ENCODE measurements at regions of chr18 and their contacts with region 1.

Region 1: DNA sequence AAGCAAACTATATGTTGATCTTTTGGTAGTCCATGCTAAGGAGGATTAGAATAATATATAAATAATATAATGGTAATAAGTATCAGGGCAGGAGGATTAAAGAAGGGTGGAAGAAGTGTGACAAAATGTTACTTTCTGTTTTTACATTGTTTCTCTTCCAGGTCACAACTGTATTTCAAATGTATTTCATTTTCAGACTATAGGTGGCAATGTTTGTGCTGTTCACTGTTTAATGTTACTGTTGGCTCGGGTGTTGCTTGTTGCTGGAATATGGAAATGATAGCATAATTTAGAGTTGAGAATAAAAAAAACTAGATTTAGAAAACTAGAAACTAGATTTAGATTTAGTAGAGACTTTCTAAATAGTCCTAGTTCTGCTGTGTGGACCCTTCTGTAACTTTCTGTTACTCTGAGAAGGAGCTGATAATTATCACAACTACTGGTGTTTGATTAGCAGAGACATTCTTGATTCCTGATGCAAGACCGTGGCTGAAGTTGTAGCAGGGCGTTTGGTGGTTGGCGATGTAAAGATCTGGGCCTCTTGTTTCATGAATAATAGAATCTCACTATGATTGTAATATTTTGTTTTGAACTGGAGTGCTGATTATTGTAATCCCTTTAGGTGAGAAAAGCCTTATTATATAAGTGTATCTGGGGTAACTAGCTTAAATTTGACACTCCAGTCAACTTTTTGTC is 7.9 kb downstream of the NEDD4L start:
- DNase-seq: no peak
- ATAC-seq: peak; percentile 91
- H3K4me3 ChIP-seq: no peak overlapping the region
- H3K27ac ChIP-seq: no peak overlapping the region
- H3K4me1 ChIP-seq: no peaks in the 10 kb centered on the region
- H3K27me3 ChIP-seq: no peaks in the 10 kb centered on the region
- CTCF ChIP-seq: peak; percentile 38 to 62 (median 41); a peak in 5 of 6 replicates
- EP300 ChIP-seq: no peak
- POLR2A ChIP-seq: no peak
- RAD21 ChIP-seq: peak; percentile 45; the same call in 1 of the 2 replicates

Region 2: DNA sequence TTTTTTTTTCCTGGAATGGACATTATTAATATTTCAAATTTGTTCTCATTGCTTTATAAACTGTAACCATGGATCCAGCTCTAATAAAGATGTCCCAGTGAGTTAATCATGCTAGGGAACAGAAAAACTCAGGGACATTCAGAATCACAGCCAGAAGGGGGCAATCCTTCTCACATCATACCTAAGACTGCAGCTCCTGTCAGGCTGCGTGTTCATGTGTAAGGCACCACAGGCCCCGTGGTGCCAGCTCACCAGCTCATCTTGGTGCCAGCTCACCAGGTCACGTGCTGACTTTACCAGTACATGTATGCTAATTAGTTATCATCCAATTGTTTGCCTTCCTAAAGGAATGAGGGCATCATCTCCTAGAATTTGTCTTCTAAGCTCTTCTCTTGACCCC is 92.6 kb before region 1 on chr18:
- CTCF ChIA-PET with region 1: interaction called, 12 read pairs
- POLR2A ChIA-PET with region 1: no interaction called
- RAD21 ChIA-PET with region 1: interaction called, 4 read pairs
- SMC1A ChIA-PET with region 1: interaction called, 6 read pairs
- in situ Hi-C with region 1: no loop called
- intact Hi-C with region 1: no loop called
- DNase-seq: no peak
- ATAC-seq: peak; percentile 86
- H3K4me3 ChIP-seq: no peak overlapping the region
- H3K27ac ChIP-seq: no peak overlapping the region
- H3K4me1 ChIP-seq: no peaks in the 10 kb centered on the region
- H3K27me3 ChIP-seq: 0 out of 4 replicates have a peak, but pooled peaks cover 0 to 2% of the 10 kb centered on the region in 2 experiments
- CTCF ChIP-seq: peak; percentile 45 to 54 (median 49); a peak in 5 of 6 replicates
- EP300 ChIP-seq: no peak
- POLR2A ChIP-seq: no peak
- RAD21 ChIP-seq: 0 out of 2 replicates have a peak, but pooled peaks have one; percentile 27

Region 3: GRCh38 chr18:58024139-58024538 is 27.8 kb before region 1 on chr18:
- CTCF ChIA-PET with region 1: no interaction called
- POLR2A ChIA-PET with region 1: no interaction called
- RAD21 ChIA-PET with region 1: no interaction called
- SMC1A ChIA-PET with region 1: no interaction called
- in situ Hi-C with region 1: no loop called
- intact Hi-C with region 1: no loop called
- DNase-seq: no peak
- ATAC-seq: no peak
- H3K4me3 ChIP-seq: no peak overlapping the region
- H3K27ac ChIP-seq: no peak overlapping the region
- H3K4me1 ChIP-seq: no peaks in the 10 kb centered on the region
- H3K27me3 ChIP-seq: peaks cover 0 to 3% of the 10 kb centered on the region in 2 experiments; a peak in 1 of 4 replicates
- CTCF ChIP-seq: no peak
- EP300 ChIP-seq: no peak
- POLR2A ChIP-seq: no peak
- RAD21 ChIP-seq: no peak

Region 4: DNA sequence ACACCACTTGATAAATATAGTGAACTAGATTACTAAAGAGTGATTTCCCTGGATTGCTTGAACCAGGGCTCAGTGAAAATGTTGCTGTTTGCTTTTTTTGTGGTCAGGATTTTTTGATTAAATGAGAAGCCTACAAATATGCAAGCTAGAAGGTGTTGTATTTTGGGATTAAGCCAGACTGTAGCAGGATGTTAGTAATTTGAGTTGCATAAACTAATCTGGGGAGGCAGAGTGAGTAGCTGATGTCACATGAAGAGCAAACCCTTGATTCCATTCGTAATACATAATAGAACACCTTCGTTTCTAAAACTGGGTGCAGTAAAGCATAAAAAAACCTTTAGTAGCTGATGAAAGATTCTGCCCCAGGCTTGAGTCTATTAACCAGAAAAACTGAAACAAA is 24.1 kb after region 1 on chr18:
- CTCF ChIA-PET with region 1: interaction called, 12 read pairs
- POLR2A ChIA-PET with region 1: no interaction called
- RAD21 ChIA-PET with region 1: interaction called, 4 read pairs
- SMC1A ChIA-PET with region 1: interaction called, 8 read pairs
- in situ Hi-C with region 1: no loop called
- intact Hi-C with region 1: no loop called
- DNase-seq: no peak
- ATAC-seq: no peak
- H3K4me3 ChIP-seq: no peak overlapping the region
- H3K27ac ChIP-seq: no peak overlapping the region
- H3K4me1 ChIP-seq: no peaks in the 10 kb centered on the region
- H3K27me3 ChIP-seq: no peaks in the 10 kb centered on the region
- CTCF ChIP-seq: no peak
- EP300 ChIP-seq: no peak
- POLR2A ChIP-seq: no peak
- RAD21 ChIP-seq: no peak

Region 5: GRCh38 chr18:58097121-58097906 is 45.4 kb after region 1 on chr18:
- CTCF ChIA-PET with region 1: interaction called, 43 read pairs
- POLR2A ChIA-PET with region 1: interaction called, 8 read pairs
- RAD21 ChIA-PET with region 1: interaction called, 26 read pairs
- SMC1A ChIA-PET with region 1: interaction called, 43 read pairs
- in situ Hi-C with region 1: no loop called
- intact Hi-C with region 1: no loop called
- DNase-seq: no peak
- ATAC-seq: no peak
- H3K4me3 ChIP-seq: no peak overlapping the region
- H3K27ac ChIP-seq: no peak overlapping the region
- H3K4me1 ChIP-seq: peaks cover 11% of the 10 kb centered on the region
- H3K27me3 ChIP-seq: no peaks in the 10 kb centered on the region
- CTCF ChIP-seq: no peak
- EP300 ChIP-seq: no peak
- POLR2A ChIP-seq: no peak
- RAD21 ChIP-seq: no peak

Region 6: GRCh38 chr18:58117786-58118403 is 66.0 kb after region 1 on chr18:
- CTCF ChIA-PET with region 1: interaction called, 117 read pairs
- POLR2A ChIA-PET with region 1: interaction called, 6 read pairs
- RAD21 ChIA-PET with region 1: interaction called, 44 read pairs
- SMC1A ChIA-PET with region 1: interaction called, 55 read pairs
- in situ Hi-C with region 1: loop called (anchors 5 kb)
- intact Hi-C with region 1: no loop called
- DNase-seq: no peak
- ATAC-seq: no peak
- H3K4me3 ChIP-seq: no peak overlapping the region
- H3K27ac ChIP-seq: no peak overlapping the region
- H3K4me1 ChIP-seq: peaks cover 9% of the 10 kb centered on the region
- H3K27me3 ChIP-seq: no peaks in the 10 kb centered on the region
- CTCF ChIP-seq: no peak
- EP300 ChIP-seq: no peak
- POLR2A ChIP-seq: no peak
- RAD21 ChIP-seq: no peak

Region 7: GRCh38 chr18:58180738-58181353 is 128.9 kb after region 1 on chr18:
- CTCF ChIA-PET with region 1: interaction called, 12 read pairs
- POLR2A ChIA-PET with region 1: no interaction called
- RAD21 ChIA-PET with region 1: interaction called, 4 read pairs
- SMC1A ChIA-PET with region 1: interaction called, 6 read pairs
- in situ Hi-C with region 1: no loop called
- intact Hi-C with region 1: no loop called
- DNase-seq: no peak
- ATAC-seq: peak; percentile 86
- H3K4me3 ChIP-seq: no peak overlapping the region
- H3K27ac ChIP-seq: no peak overlapping the region
- H3K4me1 ChIP-seq: no peaks in the 10 kb centered on the region
- H3K27me3 ChIP-seq: no peaks in the 10 kb centered on the region
- CTCF ChIP-seq: peak; percentile 78 to 87 (median 78)
- EP300 ChIP-seq: no peak
- POLR2A ChIP-seq: no peak
- RAD21 ChIP-seq: peak; percentile 79